CD8-positive, alpha-beta memory T cell (primary cell): ENCODE measurements at regions of chr4 and their contacts with region 1.

Region 1: DNA sequence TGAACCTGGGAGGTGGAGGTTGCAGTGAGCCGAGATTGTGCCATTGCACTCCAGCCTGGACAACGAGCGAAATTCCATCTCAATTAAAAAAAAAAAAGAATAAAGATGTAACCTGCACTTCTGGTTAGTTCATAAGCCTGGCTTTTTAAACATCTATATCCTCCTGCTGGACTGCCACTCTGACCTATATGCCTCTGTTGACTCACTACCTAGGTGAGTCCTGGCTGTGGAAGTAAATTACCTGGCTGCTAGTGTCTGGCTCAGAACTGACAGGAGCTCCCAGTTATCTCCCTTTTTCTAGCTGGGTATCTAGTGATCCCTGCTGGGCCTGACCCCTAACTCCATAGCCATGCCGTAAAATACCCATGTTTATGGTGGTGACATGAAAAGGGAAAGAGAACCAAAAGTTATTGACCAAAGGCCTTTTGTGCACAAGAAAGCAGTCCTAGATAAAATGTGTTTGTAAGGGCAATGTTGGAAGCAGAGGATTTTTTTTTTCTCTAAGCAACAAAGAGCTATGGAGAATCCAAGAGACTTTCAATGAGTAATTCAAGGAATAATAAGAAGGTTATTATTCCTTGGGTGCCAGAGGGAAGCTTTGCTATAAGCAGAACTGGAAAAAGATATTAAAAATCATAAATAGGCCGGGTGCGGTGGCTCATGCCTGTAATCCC is 10.4 kb upstream of the G3BP2 start:
- DNase-seq: no peak
- H3K4me3 ChIP-seq: no peak overlapping the region
- H3K4me3 Mint-ChIP-seq: peak overlapping the region in 2 of 7 donors; percentile 24 to 37
- H3K27ac ChIP-seq: no peak overlapping the region
- H3K27ac Mint-ChIP-seq: peak overlapping the region in 6 of 8 donors; percentile 67 to 94 (median 86)
- H3K4me1 ChIP-seq: peaks cover 24% of the 10 kb centered on the region
- H3K4me1 Mint-ChIP-seq: peaks cover 35 to 48% (median 39%) of the 10 kb centered on the region in 3 donors
- H3K27me3 ChIP-seq: no peaks in the 10 kb centered on the region
- H3K27me3 Mint-ChIP-seq: no peaks in the 10 kb centered on the region

Region 2: DNA sequence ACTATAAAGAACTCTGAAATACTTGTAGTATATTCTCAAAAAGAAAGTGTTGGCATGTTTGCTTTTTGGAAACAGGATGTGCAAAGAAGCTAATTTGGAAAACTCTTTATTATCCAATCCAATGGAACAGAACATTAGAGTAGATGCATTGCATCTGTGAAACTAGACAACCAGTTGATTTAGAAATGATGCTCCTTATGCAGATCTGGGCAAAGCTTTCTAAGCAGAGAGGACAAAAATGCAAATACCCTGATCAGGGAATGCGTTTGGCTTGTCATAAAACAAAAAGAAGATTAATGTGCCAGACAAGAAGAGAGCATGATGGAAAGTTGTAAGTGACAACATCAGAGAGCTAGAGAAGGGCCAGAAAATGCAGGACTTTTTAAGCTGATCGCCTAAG is 311.7 kb before region 1 on chr4:
- CTCF ChIA-PET with region 1: no interaction called
- POLR2A ChIA-PET with region 1: no interaction called
- DNase-seq: no peak
- H3K4me3 ChIP-seq: no peak overlapping the region
- H3K4me3 Mint-ChIP-seq: no peak overlapping the region
- H3K27ac ChIP-seq: no peak overlapping the region
- H3K27ac Mint-ChIP-seq: no peak overlapping the region
- H3K4me1 ChIP-seq: no peaks in the 10 kb centered on the region
- H3K4me1 Mint-ChIP-seq: no peaks in the 10 kb centered on the region
- H3K27me3 ChIP-seq: no peaks in the 10 kb centered on the region
- H3K27me3 Mint-ChIP-seq: peaks cover 2 to 12% of the 10 kb centered on the region in 2 donors

Region 3: DNA sequence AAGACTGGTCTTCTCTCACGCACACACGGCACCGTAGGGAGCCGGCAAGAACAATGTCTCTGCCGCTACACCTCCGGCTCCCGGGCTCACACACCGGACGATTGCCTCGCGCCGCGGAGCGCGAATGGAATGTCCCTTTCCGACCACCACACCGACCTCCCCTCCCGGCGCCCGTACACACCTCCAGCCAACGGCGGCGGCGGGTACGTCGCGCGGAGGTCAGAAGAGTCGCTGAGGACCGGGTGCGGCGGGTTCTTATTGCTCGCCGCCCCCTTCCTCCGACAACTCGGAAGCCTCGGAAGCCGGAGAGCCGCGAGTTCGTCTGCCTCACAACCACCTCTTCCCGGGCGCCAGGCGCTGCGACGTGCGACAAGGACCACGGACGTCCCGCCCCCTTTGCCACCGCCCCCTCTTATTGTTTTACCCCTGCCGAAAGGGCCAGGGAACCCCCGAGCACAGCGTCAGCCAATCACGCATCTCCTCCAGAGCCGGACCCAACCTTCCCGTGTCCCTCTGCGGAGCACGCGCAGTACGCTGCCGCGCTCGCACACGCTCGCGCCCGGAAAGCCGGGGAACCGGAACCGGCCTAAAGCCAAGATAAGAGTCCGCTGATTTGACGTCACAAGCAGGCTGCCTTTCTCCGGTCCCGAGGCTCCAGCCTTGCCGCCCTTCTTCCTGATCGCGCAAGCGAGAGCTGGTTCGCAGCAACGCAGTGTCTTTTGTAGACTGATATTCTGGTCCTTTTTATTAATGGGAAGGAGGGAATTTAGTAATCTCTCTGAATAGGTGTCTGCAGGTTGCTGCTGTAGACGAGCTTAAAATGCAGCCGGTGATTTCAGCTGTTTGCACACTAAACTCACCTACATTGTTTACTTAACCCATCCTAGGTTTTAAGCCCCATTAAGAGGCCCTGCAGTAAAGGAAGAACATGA is 10.3 kb before region 1 on chr4 and contains the start of gene G3BP2:
- CTCF ChIA-PET with region 1: interaction called, 10 read pairs
- POLR2A ChIA-PET with region 1: interaction called, 3 read pairs
- DNase-seq: peak; percentile 96 to 99 (median 97)
- H3K4me3 ChIP-seq: peak within 1 kb of the TSS; percentile 91
- H3K4me3 Mint-ChIP-seq: peak within 1 kb of the TSS; percentile 89 to 99 (median 98)
- H3K27ac ChIP-seq: peak within 1 kb of the TSS; percentile 98
- H3K27ac Mint-ChIP-seq: peak within 1 kb of the TSS; percentile 97 to 99 (median 99)
- H3K4me1 ChIP-seq: peaks cover 46% of the 10 kb centered on the region
- H3K4me1 Mint-ChIP-seq: peaks cover 41 to 49% (median 49%) of the 10 kb centered on the region in 3 donors
- H3K27me3 ChIP-seq: no peaks in the 10 kb centered on the region
- H3K27me3 Mint-ChIP-seq: peaks cover 0 to 3% of the 10 kb centered on the region in 2 donors
- total RNA-seq, gene G3BP2: 189 to 195 TPM

Region 4: GRCh38 chr4:75736862-75737261 is 53.2 kb after region 1 on chr4:
- CTCF ChIA-PET with region 1: no interaction called
- POLR2A ChIA-PET with region 1: no interaction called
- DNase-seq: no peak
- H3K4me3 ChIP-seq: no peak overlapping the region
- H3K4me3 Mint-ChIP-seq: no peak overlapping the region
- H3K27ac ChIP-seq: no peak overlapping the region
- H3K27ac Mint-ChIP-seq: peak overlapping the region in 1 of 8 donors; percentile 26
- H3K4me1 ChIP-seq: no peaks in the 10 kb centered on the region
- H3K4me1 Mint-ChIP-seq: peaks cover 26 to 52% (median 41%) of the 10 kb centered on the region in 3 donors
- H3K27me3 ChIP-seq: no peaks in the 10 kb centered on the region
- H3K27me3 Mint-ChIP-seq: no peaks in the 10 kb centered on the region